Heart right ventricle (tissue), 16 donors: ENCODE measurements at regions of chr6 and their contacts with region 1.

Region 1: DNA sequence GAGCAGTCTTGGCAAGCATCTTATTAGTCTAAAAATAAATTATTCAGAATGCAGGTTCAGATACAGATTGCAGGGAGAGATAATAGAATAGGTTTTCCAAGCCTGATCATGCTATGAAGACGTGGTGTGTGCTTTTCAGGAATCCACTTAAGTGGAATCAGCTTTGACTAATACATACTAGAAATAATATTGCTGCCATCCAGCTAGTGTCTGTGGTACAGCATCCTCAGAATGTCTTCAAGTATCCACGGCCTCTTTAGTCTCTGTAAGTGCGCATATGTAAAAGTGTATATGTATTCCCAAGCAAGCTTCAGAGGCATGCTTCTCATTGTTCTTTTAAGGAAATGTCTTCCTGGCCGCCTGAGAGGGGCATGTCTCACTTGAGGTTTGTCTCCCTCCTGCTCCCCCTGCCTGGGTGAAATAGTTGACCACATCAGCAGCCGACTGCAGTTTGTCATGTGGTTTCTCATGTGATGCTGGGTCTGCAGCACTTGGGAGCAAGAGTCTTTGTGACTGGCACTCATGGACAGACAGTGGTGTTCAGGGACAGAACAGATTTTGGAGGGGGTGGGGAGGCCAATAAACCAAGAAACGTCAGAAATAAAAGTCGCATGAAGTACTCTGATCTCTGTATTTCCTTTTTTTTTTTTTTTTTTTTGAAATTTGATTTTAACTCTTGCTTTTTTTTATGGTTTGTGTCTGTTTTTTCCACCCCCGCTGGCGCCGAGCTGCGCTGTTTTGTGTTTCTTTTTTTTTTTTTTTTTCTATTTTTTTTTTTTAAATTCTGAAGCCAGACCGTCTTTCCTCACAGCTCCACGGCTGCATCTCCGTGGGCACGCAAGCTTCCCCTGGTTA is 150.8 kb downstream of the PRL start:
- DNase-seq: peak in 1 of 2 donors; percentile 37
- ATAC-seq: peak in 7 of 8 donors; percentile 30 to 48 (median 45)
- H3K4me3 ChIP-seq: peak overlapping the region in 9 of 10 donors; percentile 21 to 45 (median 42)
- H3K27ac ChIP-seq: peak overlapping the region in 2 of 10 donors; percentile 22 to 24
- H3K4me1 ChIP-seq: peaks cover 16 to 85% (median 61%) of the 10 kb centered on the region in 9 donors
- H3K27me3 ChIP-seq: no peaks in the 10 kb centered on the region
- CTCF ChIP-seq: peak in 8 of 9 donors; percentile 20 to 66 (median 36)

Region 2: DNA sequence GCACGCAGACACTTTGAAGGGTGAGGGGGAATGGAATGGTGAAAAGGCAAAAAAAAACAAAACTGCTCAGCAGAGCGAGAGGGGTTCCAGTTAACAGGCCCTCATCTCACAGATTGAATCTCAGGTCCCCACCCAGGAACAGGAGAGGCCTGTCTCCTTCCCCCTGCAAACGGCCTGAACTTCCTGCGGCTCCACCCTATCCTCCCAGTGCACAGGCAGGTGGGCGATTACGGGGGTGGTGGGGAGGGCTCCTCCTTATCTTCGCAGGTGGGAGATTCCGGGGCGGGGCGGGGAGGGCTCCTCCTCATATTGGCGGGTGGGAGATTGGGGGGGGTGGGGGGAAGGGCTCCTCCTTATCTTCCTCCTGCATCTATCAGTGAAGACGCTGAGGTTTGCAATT is 423.5 kb before region 1 on chr6:
- intact Hi-C with region 1: loop called in 1 of 10 experiments (anchors 5 kb)
- DNase-seq: peak in 1 of 2 donors; percentile 16
- ATAC-seq: peak in 2 of 8 donors; percentile 31 to 51
- H3K4me3 ChIP-seq: no peak overlapping the region
- H3K27ac ChIP-seq: no peak overlapping the region
- H3K4me1 ChIP-seq: peaks cover 0 to 10% (median 0%) of the 10 kb centered on the region in 9 donors
- H3K27me3 ChIP-seq: no peaks in the 10 kb centered on the region
- CTCF ChIP-seq: no peak

Region 3: GRCh38 chr6:21846541-21847451 is 299.3 kb before region 1 on chr6:
- intact Hi-C with region 1: loop called in 1 of 10 experiments (anchors 10 kb)
- DNase-seq: peak in 1 of 2 donors; percentile 41
- ATAC-seq: peak; percentile 39 to 89 (median 71)
- H3K4me3 ChIP-seq: peak overlapping the region in 2 of 10 donors; percentile 3
- H3K27ac ChIP-seq: peak overlapping the region in 6 of 10 donors; percentile 20 to 81 (median 30)
- H3K4me1 ChIP-seq: peaks cover 15 to 65% (median 52%) of the 10 kb centered on the region in 9 donors
- H3K27me3 ChIP-seq: no peaks in the 10 kb centered on the region
- CTCF ChIP-seq: no peak

Region 4: GRCh38 chr6:22271081-22271480 is 125.0 kb after region 1 on chr6:
- intact Hi-C with region 1: no loop called
- DNase-seq: no peak
- ATAC-seq: no peak
- H3K4me3 ChIP-seq: no peak overlapping the region
- H3K27ac ChIP-seq: no peak overlapping the region
- H3K4me1 ChIP-seq: no peaks in the 10 kb centered on the region
- H3K27me3 ChIP-seq: no peaks in the 10 kb centered on the region
- CTCF ChIP-seq: no peak